Activated T-helper 1 cell treated with anti-CD3 and anti-CD28 coated beads, Interleukin-12 subunit alpha, Interleukin-12 subunit beta, Interleukin-2, Interleukin-4 antibody, amounts not matched to agents 30 ng/mL and 10 ng/mL and 1 ng/mL, durations not matched to agents 14 hours and 24 hours and 36 hours (primary cell): ENCODE measurements at regions of chr10 and their contacts with region 1.

Region 1: GRCh38 chr10:6667679-6668270 is 87.7 kb upstream of the PRKCQ start:
- DNase-seq: peak; percentile 26
- H3K4me3 Mint-ChIP-seq: no peak overlapping the region
- H3K27ac Mint-ChIP-seq: no peak overlapping the region
- H3K4me1 Mint-ChIP-seq: peaks cover 36% of the 10 kb centered on the region
- H3K27me3 Mint-ChIP-seq: peaks cover 20% of the 10 kb centered on the region

Region 2: GRCh38 chr10:6416892-6417512 is 250.8 kb before region 1 on chr10:
- intact Hi-C with region 1: loop called (anchors 1 kb)
- DNase-seq: no peak
- H3K4me3 Mint-ChIP-seq: no peak overlapping the region
- H3K27ac Mint-ChIP-seq: no peak overlapping the region
- H3K4me1 Mint-ChIP-seq: peaks cover 8% of the 10 kb centered on the region
- H3K27me3 Mint-ChIP-seq: peaks cover 1% of the 10 kb centered on the region

Region 3: GRCh38 chr10:6473901-6474370 is 193.8 kb before region 1 on chr10:
- intact Hi-C with region 1: loop called (anchors 1 kb)
- DNase-seq: peak; percentile 44
- H3K4me3 Mint-ChIP-seq: peak overlapping the region; percentile 86
- H3K27ac Mint-ChIP-seq: peak overlapping the region; percentile 97
- H3K4me1 Mint-ChIP-seq: peaks cover 89% of the 10 kb centered on the region
- H3K27me3 Mint-ChIP-seq: no peaks in the 10 kb centered on the region

Region 4: DNA sequence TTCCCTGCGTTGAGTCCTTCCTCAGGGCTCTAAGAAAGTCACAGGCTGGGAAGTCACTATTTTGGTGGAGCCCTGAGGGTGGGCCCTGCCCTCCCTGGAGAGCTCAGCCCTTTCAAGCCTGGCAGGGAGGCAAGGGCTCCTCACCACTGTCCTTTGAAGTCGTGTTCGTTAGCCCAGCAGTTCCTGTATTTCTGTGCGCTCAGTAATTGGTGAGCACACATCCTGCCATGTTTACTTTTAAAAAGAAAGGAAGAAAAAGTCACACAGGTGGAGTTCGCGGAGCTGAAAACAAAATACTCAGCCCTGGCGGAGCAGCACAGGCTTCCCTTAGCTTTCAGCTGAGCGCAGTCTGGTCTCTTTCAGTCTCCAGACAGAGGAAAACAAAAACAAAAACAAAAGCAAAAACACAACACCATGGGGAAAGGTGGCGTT is 124.8 kb before region 1 on chr10:
- intact Hi-C with region 1: loop called (anchors 1 kb)
- DNase-seq: peak; percentile 64
- H3K4me3 Mint-ChIP-seq: peak overlapping the region; percentile 86
- H3K27ac Mint-ChIP-seq: peak overlapping the region; percentile 99
- H3K4me1 Mint-ChIP-seq: peaks cover 74% of the 10 kb centered on the region
- H3K27me3 Mint-ChIP-seq: no peaks in the 10 kb centered on the region

Region 5: GRCh38 chr10:6593241-6593671 is 74.5 kb before region 1 on chr10:
- intact Hi-C with region 1: loop called (anchors 2 kb)
- DNase-seq: no peak
- H3K4me3 Mint-ChIP-seq: peak overlapping the region; percentile 34
- H3K27ac Mint-ChIP-seq: peak overlapping the region; percentile 93
- H3K4me1 Mint-ChIP-seq: peaks cover 95% of the 10 kb centered on the region
- H3K27me3 Mint-ChIP-seq: no peaks in the 10 kb centered on the region

Region 6: GRCh38 chr10:6647811-6648526 is 19.8 kb before region 1 on chr10:
- intact Hi-C with region 1: loop called (anchors 1 kb)
- DNase-seq: peak; percentile 58
- H3K4me3 Mint-ChIP-seq: no peak overlapping the region
- H3K27ac Mint-ChIP-seq: no peak overlapping the region
- H3K4me1 Mint-ChIP-seq: peaks cover 51% of the 10 kb centered on the region
- H3K27me3 Mint-ChIP-seq: no peaks in the 10 kb centered on the region

Region 7: GRCh38 chr10:7417103-7417623 is 749.4 kb after region 1 on chr10:
- intact Hi-C with region 1: loop called (anchors 2 kb)
- DNase-seq: no peak
- H3K4me3 Mint-ChIP-seq: no peak overlapping the region
- H3K27ac Mint-ChIP-seq: peak overlapping the region; percentile 32
- H3K4me1 Mint-ChIP-seq: peaks cover 46% of the 10 kb centered on the region
- H3K27me3 Mint-ChIP-seq: peaks cover 37% of the 10 kb centered on the region

Region 8: GRCh38 chr10:7956481-7956880 is 1288.7 kb after region 1 on chr10:
- intact Hi-C with region 1: no loop called
- DNase-seq: no peak
- H3K4me3 Mint-ChIP-seq: no peak overlapping the region
- H3K27ac Mint-ChIP-seq: no peak overlapping the region
- H3K4me1 Mint-ChIP-seq: peaks cover 7% of the 10 kb centered on the region
- H3K27me3 Mint-ChIP-seq: peaks cover 2% of the 10 kb centered on the region